CD4-positive, alpha-beta memory T cell (primary cell): ENCODE measurements at regions of chr2 and their contacts with region 1.

Region 1: GRCh38 chr2:191013932-191014652 is at the start of gene STAT1:
- DNase-seq: peak; percentile 94 to 98 (median 96)
- H3K4me3 ChIP-seq: peak within 1 kb of the TSS; percentile 92 to 95
- H3K4me3 Mint-ChIP-seq: no peak within 1 kb of the TSS
- H3K27ac ChIP-seq: peak within 1 kb of the TSS; percentile 89
- H3K27ac Mint-ChIP-seq: no peak within 1 kb of the TSS
- H3K4me1 ChIP-seq: peaks cover 71% of the 10 kb centered on the region
- H3K4me1 Mint-ChIP-seq: peaks cover 29 to 48% (median 33%) of the 10 kb centered on the region in 4 donors
- H3K27me3 ChIP-seq: no peaks in the 10 kb centered on the region
- H3K27me3 Mint-ChIP-seq: no peaks in the 10 kb centered on the region
- total RNA-seq, gene STAT1: 130 TPM

Region 2: DNA sequence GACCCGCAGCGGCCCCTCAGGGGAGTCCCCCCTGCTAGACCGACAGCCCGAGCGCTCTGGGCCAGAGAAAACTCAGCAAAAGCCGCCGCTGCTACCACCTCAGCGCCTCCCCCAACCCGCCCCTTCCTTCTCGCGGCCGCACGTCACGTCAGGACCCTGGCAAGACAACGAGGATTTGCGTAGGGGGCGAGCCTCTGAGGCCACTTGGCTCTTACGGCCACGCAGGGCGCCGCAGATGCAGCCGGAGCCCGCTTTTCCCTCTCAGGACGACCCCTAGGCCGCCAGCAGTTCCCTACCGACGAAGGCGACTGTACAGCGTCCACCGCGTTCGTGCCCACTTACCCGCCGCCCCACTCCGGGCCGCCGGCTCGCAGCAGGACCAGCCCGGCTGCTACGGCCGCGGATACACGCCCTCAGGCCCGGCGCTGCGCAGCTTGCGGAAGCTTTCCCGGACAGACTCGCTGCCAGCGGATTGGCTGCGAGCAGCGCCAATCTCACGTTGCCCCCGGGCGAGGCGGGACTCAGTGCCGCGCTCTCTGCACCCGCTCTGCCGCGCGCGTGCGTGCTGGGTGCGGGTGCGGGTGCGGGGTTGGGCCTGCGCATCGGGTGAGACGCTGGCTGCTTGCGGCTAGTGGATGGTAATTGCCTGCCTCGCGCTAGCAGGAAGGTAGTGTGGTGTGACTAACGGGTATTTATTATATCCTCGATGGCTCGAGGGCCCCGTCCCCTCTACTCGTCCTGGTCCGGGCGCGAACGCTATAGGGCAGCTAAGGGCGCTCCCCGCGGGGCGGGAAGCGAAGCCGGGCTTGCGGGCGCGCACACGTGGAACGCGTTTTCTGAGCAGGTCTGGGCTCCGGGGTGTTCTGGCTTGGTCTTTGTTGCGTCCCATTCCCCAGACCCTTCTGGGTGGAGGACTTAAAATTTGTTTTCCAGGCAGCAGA is 1229.9 kb before region 1 on chr2 and contains the starts of genes ORMDL1 and PMS1:
- CTCF ChIA-PET with region 1: no interaction called
- POLR2A ChIA-PET with region 1: no interaction called
- intact Hi-C with region 1: loop called (anchors 10 kb)
- DNase-seq: peak; percentile 93 to 96 (median 96)
- H3K4me3 ChIP-seq: peak within 1 kb of the TSS; percentile 71 to 74
- H3K4me3 Mint-ChIP-seq: peak within 1 kb of the TSS; percentile 92 to 97 (median 94)
- H3K27ac ChIP-seq: peak within 1 kb of the TSS; percentile 93
- H3K27ac Mint-ChIP-seq: peak within 1 kb of the TSS; percentile 96 to 97 (median 97)
- H3K4me1 ChIP-seq: peaks cover 52% of the 10 kb centered on the region
- H3K4me1 Mint-ChIP-seq: peaks cover 43 to 64% (median 54%) of the 10 kb centered on the region in 4 donors
- H3K27me3 ChIP-seq: no peaks in the 10 kb centered on the region
- H3K27me3 Mint-ChIP-seq: no peaks in the 10 kb centered on the region
- total RNA-seq, gene ORMDL1: 187 to 190 TPM
- total RNA-seq, gene PMS1: 29.1 to 35.1 TPM

Region 3: DNA sequence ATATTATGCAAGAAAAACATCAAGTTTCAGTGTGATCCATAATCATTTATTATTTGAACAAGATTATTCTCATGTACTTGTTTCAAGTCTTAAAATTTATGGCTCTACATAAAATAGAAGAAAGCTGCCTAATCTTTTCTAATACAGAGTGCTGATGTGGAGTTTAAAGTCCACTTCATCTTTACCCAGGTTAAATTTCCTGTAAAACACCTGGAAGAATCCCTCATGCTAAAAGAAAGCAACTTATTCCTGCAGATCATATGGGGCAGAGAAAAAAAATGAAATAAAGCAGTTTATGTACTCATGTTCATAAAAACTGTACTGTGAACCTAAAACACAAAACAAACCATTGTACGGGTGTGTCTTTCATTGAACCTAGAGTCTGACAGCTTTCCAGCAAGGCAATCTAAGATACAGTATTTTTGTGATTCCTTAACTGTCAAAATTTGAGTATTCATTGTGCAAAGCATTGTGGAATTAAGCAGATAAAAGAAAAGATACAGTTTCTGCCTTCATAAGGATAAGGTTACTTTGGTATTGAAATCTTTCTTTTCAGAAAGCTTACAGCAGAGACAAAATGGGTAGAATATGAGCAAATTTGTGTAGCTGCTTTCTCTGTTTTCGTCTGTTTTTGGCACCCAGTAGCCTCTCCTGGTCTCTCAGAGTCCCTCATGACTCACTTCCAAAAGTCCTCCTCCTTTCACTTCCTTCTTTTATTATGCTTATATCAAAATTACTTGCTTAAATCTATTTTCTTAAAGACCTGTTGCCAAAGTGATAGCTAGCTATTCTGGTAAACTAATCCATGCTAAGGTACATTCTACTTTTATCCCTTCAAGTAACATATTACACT is 160.3 kb before region 1 on chr2:
- CTCF ChIA-PET with region 1: interaction called, 16 read pairs
- POLR2A ChIA-PET with region 1: no interaction called
- intact Hi-C with region 1: no loop called
- DNase-seq: no peak
- H3K4me3 ChIP-seq: no peak overlapping the region
- H3K4me3 Mint-ChIP-seq: no peak overlapping the region
- H3K27ac ChIP-seq: no peak overlapping the region
- H3K27ac Mint-ChIP-seq: no peak overlapping the region
- H3K4me1 ChIP-seq: no peaks in the 10 kb centered on the region
- H3K4me1 Mint-ChIP-seq: peaks cover 0 to 2% (median 0%) of the 10 kb centered on the region in 4 donors
- H3K27me3 ChIP-seq: no peaks in the 10 kb centered on the region
- H3K27me3 Mint-ChIP-seq: peaks cover 0 to 1% of the 10 kb centered on the region in 2 donors

Region 4: GRCh38 chr2:191003405-191004309 is 10.4 kb before region 1 on chr2:
- CTCF ChIA-PET with region 1: interaction called, 13 read pairs
- POLR2A ChIA-PET with region 1: interaction called, 35 read pairs
- intact Hi-C with region 1: loop called (anchors 1 kb)
- DNase-seq: no peak
- H3K4me3 ChIP-seq: no peak overlapping the region
- H3K4me3 Mint-ChIP-seq: peak overlapping the region in 4 of 8 donors; percentile 13 to 54 (median 26)
- H3K27ac ChIP-seq: peak overlapping the region; percentile 15
- H3K27ac Mint-ChIP-seq: peak overlapping the region; percentile 61 to 90 (median 88)
- H3K4me1 ChIP-seq: peaks cover 64% of the 10 kb centered on the region
- H3K4me1 Mint-ChIP-seq: peaks cover 40 to 85% (median 58%) of the 10 kb centered on the region in 4 donors
- H3K27me3 ChIP-seq: no peaks in the 10 kb centered on the region
- H3K27me3 Mint-ChIP-seq: no peaks in the 10 kb centered on the region

Region 5: GRCh38 chr2:191038241-191038725 is 24.2 kb after region 1 on chr2:
- CTCF ChIA-PET with region 1: no interaction called
- POLR2A ChIA-PET with region 1: interaction called, 24 read pairs
- intact Hi-C with region 1: no loop called
- DNase-seq: peak; percentile 49 to 75 (median 63)
- H3K4me3 ChIP-seq: no peak overlapping the region
- H3K4me3 Mint-ChIP-seq: peak overlapping the region in 7 of 8 donors; percentile 33 to 84 (median 65)
- H3K27ac ChIP-seq: peak overlapping the region; percentile 39
- H3K27ac Mint-ChIP-seq: peak overlapping the region; percentile 87 to 98 (median 91)
- H3K4me1 ChIP-seq: peaks cover 31% of the 10 kb centered on the region
- H3K4me1 Mint-ChIP-seq: peaks cover 27 to 37% (median 36%) of the 10 kb centered on the region in 4 donors
- H3K27me3 ChIP-seq: no peaks in the 10 kb centered on the region
- H3K27me3 Mint-ChIP-seq: no peaks in the 10 kb centered on the region